A673 (cell line): ENCODE measurements at regions of chr17 and their contacts with region 1.

Region 1: DNA sequence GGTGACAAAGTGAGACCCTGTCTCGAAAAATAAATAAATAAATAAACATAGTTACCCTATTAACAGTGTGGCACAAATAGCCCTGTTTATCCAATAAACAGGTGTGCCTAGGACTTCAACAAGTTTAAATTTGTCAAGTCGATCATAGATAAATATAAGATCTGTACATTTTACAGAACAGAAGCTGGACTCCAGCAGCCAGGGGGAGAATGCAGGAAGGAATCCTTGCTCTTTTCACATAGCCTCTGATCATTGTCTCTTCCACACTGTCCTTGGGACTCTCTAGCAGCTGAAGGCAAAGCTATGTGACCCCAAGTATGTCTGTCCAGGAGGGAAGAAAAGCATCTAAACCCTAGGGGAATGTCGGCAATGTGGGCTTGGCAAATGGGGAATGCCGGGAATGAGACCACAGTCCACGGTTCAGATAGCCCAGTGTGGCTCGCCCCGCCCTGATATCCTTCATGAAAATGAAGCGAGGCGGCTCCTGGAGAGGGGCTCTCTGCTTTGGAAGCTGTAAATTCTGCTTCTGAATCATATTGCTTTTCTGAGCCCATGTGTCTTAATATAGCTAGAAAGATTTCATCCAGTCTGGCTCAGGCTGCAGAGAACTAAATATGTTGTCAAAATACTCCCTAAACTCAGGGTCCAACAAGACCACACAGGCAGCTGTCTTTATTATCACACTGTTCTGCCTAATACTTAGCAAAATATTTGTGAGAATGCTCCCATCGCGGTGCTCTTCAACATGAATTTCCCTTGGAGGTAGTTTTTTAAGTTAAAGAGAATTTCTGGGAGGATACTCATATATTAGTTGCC is 24.9 kb upstream of the GRB2 start:
- DNase-seq: no peak
- H3K4me3 ChIP-seq: no peak overlapping the region
- H3K27ac ChIP-seq: no peak overlapping the region
- H3K4me1 ChIP-seq: no peaks in the 10 kb centered on the region
- H3K27me3 ChIP-seq: no peaks in the 10 kb centered on the region
- CTCF ChIP-seq: no peak

Region 2: DNA sequence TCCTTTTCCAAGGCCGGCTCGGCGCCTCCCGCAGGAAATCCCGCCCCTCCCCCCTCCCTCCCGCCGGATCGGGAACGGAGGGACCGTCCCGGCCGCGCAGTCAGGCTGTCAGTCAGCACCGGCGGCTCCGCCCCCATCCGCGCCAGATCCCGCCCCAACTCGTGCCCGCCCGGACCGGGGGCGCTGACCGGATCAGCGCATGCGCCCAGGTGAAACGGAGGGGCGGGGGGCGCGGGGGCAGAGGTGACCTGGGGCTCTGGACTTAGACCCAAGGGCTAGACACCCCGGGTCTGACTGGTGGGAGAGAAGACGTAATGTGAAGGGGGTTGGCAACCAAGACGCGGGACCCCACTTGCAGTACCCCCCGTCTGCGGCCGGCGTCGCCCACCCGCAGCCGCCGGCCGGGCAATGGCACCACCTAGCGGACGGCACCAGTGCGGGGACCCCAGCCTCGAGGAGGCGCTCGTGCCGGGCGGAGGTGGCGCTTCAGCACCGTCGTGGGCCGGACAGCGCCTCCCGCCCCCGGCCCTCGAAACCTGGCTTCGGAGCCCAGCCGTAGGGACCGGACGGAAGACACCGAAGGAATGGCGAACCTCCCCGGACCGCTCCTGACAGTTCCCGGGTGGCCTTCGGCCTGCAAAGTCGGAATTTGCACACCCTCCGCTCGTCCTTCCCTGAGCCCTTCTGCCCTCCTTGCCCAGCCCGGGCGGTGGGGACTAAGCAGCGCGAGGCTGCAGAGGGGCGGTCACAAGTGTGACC is 85.3 kb after region 1 on chr17 and contains the start of gene CASKIN2:
- CTCF ChIA-PET with region 1: no interaction called
- POLR2A ChIA-PET with region 1: no interaction called
- intact Hi-C with region 1: loop called (anchors 1 kb)
- DNase-seq: peak; percentile 92
- H3K4me3 ChIP-seq: peak within 1 kb of the TSS; percentile 87
- H3K27ac ChIP-seq: peak within 1 kb of the TSS; percentile 80
- H3K4me1 ChIP-seq: no peaks in the 10 kb centered on the region
- H3K27me3 ChIP-seq: no peaks in the 10 kb centered on the region
- CTCF ChIP-seq: peak; percentile 98
- total RNA-seq, gene CASKIN2: 32.6 and 32.7 TPM in 2 replicates

Region 3: DNA sequence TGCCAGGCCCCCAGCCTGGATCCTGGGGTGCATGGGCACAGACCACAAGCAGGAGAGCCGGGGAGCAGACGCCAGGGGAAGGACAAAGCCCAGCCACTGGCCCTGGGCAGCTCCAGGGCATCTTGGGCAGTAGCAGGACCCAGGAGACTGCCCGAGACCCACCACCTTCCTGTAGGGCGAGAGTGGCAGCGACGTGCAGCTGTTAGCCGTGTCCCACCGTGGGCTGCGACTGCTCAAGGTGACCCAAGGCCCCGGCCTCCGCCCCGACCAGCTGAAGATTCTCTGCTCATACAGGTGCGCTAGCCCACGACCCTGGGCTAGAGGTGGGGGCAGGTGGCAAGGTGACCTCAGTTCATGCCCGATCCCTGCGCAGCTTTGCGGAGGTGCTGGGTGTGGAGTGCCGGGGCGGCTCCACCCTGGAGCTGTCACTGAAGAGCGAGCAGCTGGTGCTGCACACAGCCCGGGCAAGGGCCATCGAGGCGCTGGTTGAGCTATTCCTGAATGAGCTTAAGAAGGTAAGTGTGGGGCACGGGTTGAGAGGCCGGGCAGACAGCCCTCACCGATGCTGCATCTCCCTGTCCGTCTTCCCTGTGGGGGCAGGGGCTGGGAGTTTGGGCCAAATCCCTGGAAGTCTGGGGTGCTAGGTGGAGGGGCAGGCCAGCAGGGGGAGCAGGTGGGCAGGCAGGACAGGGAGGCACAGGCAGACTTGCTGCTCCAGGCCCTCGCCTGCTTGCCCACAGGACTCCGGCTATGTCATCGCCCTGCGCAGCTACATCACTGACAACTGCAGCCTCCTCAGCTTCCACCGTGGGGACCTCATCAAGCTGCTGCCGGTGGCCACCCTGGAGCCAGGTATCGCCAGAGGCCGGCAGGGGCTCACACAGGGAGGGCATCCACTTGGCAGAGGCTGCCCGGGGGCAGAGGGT is 189.4 kb after region 1 on chr17:
- CTCF ChIA-PET with region 1: no interaction called
- POLR2A ChIA-PET with region 1: no interaction called
- intact Hi-C with region 1: no loop called
- DNase-seq: peak; percentile 57
- H3K4me3 ChIP-seq: no peak overlapping the region
- H3K27ac ChIP-seq: no peak overlapping the region
- H3K4me1 ChIP-seq: no peaks in the 10 kb centered on the region
- H3K27me3 ChIP-seq: no peaks in the 10 kb centered on the region
- CTCF ChIP-seq: peak; percentile 60

Region 4: DNA sequence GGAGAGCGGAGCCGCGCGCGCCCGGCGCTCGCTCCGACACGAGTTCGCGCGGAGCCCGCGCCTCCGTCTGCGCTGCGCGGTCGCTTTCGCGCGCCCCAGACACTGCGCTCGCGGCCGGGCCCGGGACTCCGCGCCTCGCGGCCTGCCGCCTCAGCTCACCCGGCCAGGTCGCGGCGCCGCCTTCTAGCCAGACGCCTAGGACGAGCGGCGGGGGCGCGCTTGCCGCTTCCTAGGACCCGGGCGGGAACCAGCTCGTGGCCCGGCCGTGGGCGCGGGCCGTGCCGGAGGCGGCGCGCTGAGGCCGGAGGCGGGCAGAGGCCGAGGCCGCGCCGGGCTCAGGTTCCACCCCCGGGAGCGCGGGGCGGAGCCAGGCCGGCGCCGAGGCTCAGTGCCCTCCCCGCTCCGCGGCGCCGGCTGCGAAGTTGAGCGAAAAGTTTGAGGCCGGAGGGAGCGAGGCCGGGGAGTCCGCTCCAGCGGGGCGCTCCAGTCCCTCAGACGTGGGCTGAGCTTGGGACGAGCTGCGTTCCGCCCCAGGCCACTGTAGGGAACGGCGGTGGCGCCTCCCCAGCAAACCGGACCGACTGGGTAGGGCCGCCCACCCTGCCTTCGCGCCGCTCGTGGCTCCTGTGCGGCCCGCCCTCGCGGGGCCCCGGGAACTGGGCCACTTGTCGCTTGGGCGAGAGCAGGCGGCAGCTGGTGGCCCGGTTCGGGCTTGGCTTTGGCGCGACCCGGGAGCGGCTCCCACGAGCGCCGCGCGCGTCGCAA is 954.0 kb after region 1 on chr17 and contains the start of gene SPHK1:
- CTCF ChIA-PET with region 1: no interaction called
- POLR2A ChIA-PET with region 1: no interaction called
- intact Hi-C with region 1: no loop called
- DNase-seq: peak; percentile 74
- H3K4me3 ChIP-seq: peak within 1 kb of the TSS; percentile 48
- H3K27ac ChIP-seq: no peak within 1 kb of the TSS
- H3K4me1 ChIP-seq: peaks cover 24% of the 10 kb centered on the region
- H3K27me3 ChIP-seq: peaks cover 19% of the 10 kb centered on the region
- CTCF ChIP-seq: no peak
- total RNA-seq, gene SPHK1: 0.50 and 0.54 TPM in 2 replicates